ENCODE measurements at regions of chr11 and their contacts with region 1.

Region 1: DNA sequence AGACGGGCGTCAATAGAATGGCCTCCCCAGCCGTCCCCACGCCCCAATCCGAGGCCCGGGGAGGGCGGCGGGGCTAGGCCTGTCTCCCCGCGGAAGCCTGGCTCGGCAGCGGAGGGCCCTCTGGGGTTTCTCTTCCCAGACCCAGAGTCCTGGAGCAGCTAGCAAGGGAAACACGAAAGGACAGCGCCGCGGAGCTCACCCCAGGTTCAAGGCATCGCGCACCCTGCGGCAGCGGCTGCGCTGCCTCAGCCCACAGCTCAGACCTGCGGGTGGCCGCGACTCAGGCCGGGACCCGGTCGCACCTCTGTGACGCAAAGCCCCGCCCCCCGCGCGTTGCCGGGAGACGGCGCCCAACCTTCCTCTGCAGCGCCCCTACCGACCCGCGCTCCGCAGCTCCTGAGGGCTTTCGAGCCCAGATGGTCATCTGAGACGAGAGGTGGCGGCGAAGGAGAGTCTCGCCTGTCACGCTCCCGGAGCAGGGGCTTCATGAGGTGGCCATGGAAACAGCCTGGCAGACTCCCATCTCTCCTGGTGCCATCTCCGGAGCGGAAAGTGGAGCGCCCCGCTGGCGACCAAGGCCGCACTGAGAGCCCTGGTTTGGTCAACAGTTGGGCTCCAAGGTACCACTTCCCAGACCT is at the start of gene RNF141:
- DNase-seq: peak; percentile 42
- H3K4me3 ChIP-seq: peak within 1 kb of the TSS; percentile 79
- H3K27me3 ChIP-seq: no peaks in the 10 kb centered on the region
- CTCF ChIP-seq: peak; percentile 92
- polyA plus RNA-seq, gene RNF141: 12.1 and 27.5 TPM in 2 replicates

Region 2: GRCh38 chr11:10551845-10552352 is 10.9 kb after region 1 on chr11:
- CTCF ChIA-PET with region 1: interaction called, 12 read pairs
- POLR2A ChIA-PET with region 1: no interaction called
- DNase-seq: no peak
- H3K4me3 ChIP-seq: no peak overlapping the region
- H3K27me3 ChIP-seq: no peaks in the 10 kb centered on the region
- CTCF ChIP-seq: no peak

Region 3: GRCh38 chr11:10558288-10558687 is 17.2 kb after region 1 on chr11:
- CTCF ChIA-PET with region 1: interaction called, 12 read pairs
- POLR2A ChIA-PET with region 1: no interaction called
- DNase-seq: no peak
- H3K4me3 ChIP-seq: no peak overlapping the region
- H3K27me3 ChIP-seq: no peaks in the 10 kb centered on the region
- CTCF ChIP-seq: no peak

Region 4: GRCh38 chr11:10564696-10565318 is 23.8 kb after region 1 on chr11:
- CTCF ChIA-PET with region 1: interaction called, 14 read pairs
- POLR2A ChIA-PET with region 1: interaction called, 3 read pairs
- DNase-seq: no peak
- H3K4me3 ChIP-seq: no peak overlapping the region
- H3K27me3 ChIP-seq: no peaks in the 10 kb centered on the region
- CTCF ChIP-seq: peak; percentile 47

Region 5: GRCh38 chr11:10606536-10607208 is 65.6 kb after region 1 on chr11:
- CTCF ChIA-PET with region 1: interaction called, 11 read pairs
- POLR2A ChIA-PET with region 1: no interaction called
- DNase-seq: no peak
- H3K4me3 ChIP-seq: no peak overlapping the region
- H3K27me3 ChIP-seq: no peaks in the 10 kb centered on the region
- CTCF ChIP-seq: no peak